Activated T-helper 1 cell treated with anti-CD3 and anti-CD28 coated beads, Interleukin-12 subunit alpha, Interleukin-12 subunit beta, Interleukin-2, Interleukin-4 antibody, amounts not matched to agents 30 ng/mL and 10 ng/mL and 1 ng/mL, durations not matched to agents 14 hours and 24 hours and 36 hours (primary cell): ENCODE measurements at regions of chr7 and their contacts with region 1.

Region 1: DNA sequence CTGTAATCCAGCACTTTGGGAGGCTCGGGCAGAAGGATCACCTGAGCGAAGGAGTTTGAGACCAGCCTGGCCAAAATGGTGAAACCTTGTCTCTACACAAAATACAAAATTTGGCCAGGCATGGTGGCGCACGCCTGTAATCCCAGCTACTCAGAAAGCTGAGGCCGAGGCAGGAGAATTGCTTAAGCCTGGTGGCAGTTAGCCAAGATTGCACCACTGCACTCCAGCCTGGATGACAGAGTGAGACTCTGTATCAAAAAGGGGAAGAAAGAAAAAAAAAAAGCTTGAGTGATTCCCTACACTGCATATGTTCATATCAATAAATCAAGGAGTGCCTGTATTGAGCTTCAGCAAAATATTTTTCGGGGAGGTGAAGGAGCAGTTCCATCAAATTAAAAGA is 45.8 kb upstream of the SRRM3 start:
- DNase-seq: no peak
- H3K4me3 Mint-ChIP-seq: no peak overlapping the region
- H3K27ac Mint-ChIP-seq: no peak overlapping the region
- H3K4me1 Mint-ChIP-seq: peaks cover 26% of the 10 kb centered on the region
- H3K27me3 Mint-ChIP-seq: no peaks in the 10 kb centered on the region

Region 2: DNA sequence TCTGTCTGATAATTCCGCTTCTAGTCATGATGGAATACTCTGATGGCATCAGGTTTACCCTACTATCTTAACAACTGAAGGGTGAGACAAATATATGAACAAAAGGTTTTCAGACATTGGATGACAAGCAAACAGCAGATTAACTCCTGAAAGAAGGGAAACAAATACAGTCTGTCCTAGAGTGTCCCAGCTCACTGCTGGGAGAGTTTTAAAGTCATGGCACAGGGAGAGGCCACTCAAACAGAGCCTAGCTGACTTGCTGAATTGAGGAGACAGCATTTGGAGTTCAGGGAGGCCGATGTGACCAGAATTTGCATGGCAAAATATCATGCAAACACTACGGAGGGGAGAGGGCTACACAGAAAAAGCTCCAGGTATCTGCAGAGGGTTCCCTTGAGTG is 34.9 kb before region 1 on chr7:
- intact Hi-C with region 1: loop called (anchors 1 kb)
- DNase-seq: no peak
- H3K4me3 Mint-ChIP-seq: no peak overlapping the region
- H3K27ac Mint-ChIP-seq: no peak overlapping the region
- H3K4me1 Mint-ChIP-seq: peaks cover 10% of the 10 kb centered on the region
- H3K27me3 Mint-ChIP-seq: no peaks in the 10 kb centered on the region